Left cardiac atrium (tissue), 4 donors: ENCODE measurements at regions of chr14 and their contacts with region 1.

Region 1: DNA sequence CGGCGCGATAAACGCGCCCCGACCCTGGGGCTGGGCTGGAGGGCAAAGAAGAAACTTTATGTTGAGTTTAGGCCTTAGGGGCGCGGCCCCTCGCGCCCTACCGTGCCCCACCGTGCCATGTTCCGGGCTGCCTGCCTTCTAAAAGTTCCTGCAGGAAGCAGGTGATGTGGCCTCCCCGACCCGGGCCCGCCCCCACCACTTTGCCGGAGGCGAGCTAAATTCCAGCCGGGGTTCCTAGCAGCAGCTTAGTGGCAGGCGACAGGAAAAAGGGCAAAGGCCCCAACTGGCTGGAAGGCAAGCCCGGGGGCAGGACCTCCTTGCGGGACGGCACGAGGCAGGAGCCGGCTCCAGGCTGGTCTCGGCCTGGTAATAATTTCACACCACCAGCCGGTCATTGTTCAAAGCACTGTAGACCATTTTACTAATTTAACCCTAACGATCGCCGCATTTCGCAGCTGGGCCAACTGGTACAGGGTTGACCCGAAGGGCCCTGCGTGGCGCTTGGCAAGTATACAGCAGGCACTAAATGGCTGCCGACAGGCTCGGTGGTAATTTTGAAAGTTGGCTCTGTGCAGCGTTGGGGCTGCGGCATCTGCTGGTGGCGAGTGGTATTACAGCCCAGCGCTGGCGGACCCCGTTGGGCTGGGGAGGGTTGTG is 895 bp upstream of the CCDC88C start:
- DNase-seq: peak; percentile 71
- ATAC-seq: peak; percentile 48 to 78

Region 2: DNA sequence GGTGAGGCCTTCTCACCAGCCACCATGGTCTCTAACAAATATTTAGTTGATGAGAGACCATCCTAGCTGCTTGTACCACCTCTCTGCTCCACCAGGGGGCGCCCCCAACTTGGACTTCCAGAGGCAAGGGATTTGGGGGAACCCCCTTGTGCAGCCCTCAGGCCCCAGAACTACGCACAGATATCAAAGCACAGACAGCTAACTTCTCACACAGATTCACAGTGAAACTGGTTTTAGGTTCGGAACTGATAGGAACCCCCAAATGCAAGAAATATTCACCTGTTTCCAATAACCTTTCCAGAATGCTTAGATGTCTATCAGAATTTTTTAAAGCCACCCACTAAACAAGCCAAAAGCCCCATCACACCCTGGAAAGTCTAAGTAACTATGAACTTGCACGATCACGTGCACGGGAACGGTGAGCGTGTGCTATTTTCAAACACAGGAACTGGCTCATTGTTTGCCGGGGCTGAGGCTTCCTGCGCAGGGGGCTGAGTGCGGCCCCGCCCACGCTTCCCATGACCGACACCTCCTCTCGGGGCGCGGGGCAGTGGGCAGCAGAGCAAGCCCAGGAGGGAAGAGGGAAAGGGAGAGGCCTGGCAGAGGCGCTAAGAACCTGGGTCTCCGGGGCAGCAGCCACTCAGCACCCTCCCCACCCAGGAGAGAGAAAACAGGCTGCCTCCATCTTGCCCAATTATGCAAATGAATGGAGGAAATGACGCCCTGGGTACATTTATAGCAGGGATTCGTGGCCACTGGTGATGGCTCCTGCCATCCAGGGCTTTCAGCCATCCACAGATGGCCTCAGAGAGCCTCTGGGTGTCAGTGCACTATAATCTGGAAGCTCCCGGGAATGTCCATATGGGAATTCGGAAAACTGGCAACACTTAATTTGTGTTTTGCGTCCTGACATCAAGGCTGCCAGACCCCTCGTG is 94.6 kb before region 1 on chr14:
- intact Hi-C with region 1: loop called (anchors 1 to 5 kb)
- DNase-seq: peak; percentile 88
- ATAC-seq: peak; percentile 79 to 89

Region 3: GRCh38 chr14:92637228-92637627 is 1218.7 kb after region 1 on chr14:
- intact Hi-C with region 1: no loop called
- DNase-seq: no peak
- ATAC-seq: no peak